WTC11 (cell line): ENCODE measurements at regions of chr11 and their contacts with region 1.

Region 1: DNA sequence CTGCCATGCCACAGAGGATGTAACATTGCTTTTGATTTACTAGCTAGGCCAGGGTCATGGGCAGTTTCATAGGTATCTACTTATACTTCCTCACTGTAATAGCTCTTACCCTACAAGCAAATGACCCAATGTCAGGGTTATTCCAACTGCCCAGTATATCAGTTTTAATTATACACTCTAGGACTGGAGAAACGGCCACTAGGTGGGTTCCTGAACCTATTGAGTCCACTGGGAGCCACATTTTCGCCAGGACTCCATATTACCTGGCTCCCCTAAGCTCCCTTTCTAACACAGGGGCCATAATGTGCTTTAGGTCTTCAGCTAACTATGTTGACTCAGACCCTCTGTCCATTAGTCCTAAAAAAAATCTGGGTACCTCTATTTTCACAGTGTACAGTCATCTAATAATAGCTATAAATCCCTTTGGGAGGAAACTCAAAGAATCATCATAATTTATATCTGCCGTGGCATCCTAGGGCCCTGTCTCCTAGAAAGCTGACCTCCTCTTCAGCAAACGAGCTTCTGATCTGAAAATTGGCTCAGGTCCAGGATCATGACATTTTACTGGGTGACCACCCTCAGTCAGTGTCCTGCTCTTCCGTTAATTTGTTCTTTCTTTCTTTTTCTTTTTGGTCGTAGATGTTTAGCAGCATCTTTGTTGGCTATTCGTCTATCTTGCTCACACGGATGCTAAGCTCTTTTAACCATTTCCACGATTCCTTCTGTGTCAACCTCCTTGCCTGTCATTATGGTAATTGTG is 244.3 kb downstream of the FAM76B start:
- DNase-seq: peak; percentile 14
- ATAC-seq: peak; percentile 59
- H3K4me3 Mint-ChIP-seq: no peak overlapping the region
- H3K27ac Mint-ChIP-seq: no peak overlapping the region
- H3K4me1 Mint-ChIP-seq: no peaks in the 10 kb centered on the region
- H3K27me3 Mint-ChIP-seq: no peaks in the 10 kb centered on the region; the same call in 1 of the 2 replicates
- CTCF ChIP-seq: no peak

Region 2: DNA sequence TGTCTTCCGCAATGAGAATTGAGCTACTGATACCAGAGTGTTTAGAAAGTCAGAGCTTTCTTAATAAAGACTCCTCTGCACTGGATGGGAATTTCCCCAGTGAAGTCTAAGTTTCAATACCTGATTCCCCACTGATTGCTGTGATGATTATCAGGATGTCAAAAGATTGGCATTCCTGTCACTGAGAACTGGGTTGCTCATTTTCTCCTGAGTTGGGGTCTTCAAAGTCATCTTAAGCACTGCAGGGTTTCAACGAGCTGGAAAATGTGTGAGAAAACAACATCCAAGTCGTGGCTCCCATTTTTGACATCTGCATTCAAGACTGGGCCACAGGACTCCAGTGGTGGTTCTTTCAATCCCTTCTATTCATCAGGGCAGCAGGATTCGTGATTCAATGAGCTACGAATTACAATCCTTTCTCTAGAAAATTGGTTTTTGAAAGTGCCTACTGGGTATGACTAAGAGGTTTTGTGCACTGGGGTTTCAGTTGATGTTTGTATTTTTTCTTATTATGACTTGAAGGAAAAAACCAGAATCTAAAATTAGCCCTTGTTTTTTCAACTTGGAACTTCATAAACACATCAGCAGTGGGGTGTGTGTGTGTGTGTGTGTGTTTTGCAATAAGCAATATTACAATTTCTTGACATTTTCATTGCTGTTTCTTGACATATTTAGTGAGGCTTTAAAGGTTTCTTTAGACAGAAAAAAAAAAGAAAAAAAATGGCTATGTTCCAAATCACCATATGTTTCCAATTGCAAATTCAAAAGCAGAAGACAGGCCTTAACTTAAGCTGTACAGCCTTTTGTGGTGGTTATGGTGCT is 11.3 kb after region 1 on chr11:
- CTCF ChIA-PET with region 1: interaction called, 10 read pairs
- POLR2A ChIA-PET with region 1: no interaction called
- DNase-seq: no peak
- ATAC-seq: peak; percentile 43
- H3K4me3 Mint-ChIP-seq: no peak overlapping the region
- H3K27ac Mint-ChIP-seq: peak overlapping the region; percentile 21; the same call in 1 of the 2 replicates
- H3K4me1 Mint-ChIP-seq: peaks cover 18% of the 10 kb centered on the region
- H3K27me3 Mint-ChIP-seq: no peaks in the 10 kb centered on the region
- CTCF ChIP-seq: no peak